ENCODE measurements at regions of chr2 and their contacts with region 1.

Region 1: GRCh38 chr2:231411831-231412617 is 16.5 kb downstream of the B3GNT7 start:
- DNase-seq: peak; percentile 90 to 96 (median 93)
- ATAC-seq: peak; percentile 84
- H3K4me3 ChIP-seq: peak overlapping the region; percentile 26
- H3K4me1 ChIP-seq: peaks cover 22% of the 10 kb centered on the region
- CTCF ChIP-seq: peak; percentile 83

Region 2: GRCh38 chr2:231104115-231104713 is 307.8 kb before region 1 on chr2:
- intact Hi-C with region 1: loop called in 1 of 2 experiments (anchors 10 kb)
- DNase-seq: peak in 1 of 3 donors; percentile 90
- ATAC-seq: peak; percentile 74
- H3K4me3 ChIP-seq: no peak overlapping the region
- H3K4me1 ChIP-seq: peaks cover 6% of the 10 kb centered on the region
- CTCF ChIP-seq: peak; percentile 78

Region 3: DNA sequence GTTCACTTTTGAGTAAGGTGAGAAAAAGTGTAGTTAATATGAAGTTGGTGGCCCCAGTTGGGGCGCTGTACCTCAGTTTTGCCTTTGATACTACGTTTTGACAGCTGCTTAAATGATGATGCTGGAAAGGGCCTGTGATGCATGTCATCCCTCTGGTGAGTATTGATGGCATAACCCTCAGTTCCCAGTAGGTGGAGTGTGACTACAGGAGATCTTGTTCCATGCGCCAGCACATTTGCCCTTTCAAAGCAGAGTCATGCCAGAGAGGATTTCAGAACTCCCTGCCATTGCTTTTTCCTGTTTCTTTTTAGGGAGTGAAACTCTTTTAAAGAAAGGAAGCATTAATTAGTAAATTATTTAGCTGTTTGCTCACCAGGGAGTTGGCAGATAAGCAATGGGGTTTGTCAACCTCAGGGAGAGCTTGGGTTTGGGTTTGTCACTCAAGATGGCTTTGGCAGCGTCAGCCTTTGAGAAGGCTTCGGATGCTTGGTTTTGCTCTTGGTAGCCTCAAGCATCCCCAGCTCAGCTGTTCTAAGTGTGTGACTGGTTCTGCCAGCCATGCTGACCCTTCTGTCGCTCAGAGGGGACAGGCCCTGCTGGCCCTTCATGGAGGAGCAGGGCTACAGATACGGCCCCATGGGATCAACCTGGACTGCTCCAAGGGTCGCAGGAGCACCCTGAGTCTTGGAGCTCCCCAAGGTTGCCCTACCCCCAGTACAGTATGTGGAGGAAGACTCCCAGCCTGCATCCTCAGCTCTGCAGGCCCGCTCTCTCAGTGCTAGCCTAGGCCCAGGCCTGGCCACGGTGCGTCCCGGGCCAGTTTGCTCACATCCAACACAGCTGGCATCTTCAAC is 184.5 kb before region 1 on chr2:
- intact Hi-C with region 1: loop called (anchors 5 to 10 kb)
- DNase-seq: peak in 1 of 3 donors; percentile 81
- ATAC-seq: peak; percentile 96
- H3K4me3 ChIP-seq: no peak overlapping the region
- H3K4me1 ChIP-seq: peaks cover 16% of the 10 kb centered on the region
- CTCF ChIP-seq: peak; percentile 53

Region 4: GRCh38 chr2:231297108-231297908 is 114.7 kb before region 1 on chr2:
- intact Hi-C with region 1: loop called (anchors 5 to 10 kb)
- DNase-seq: peak; percentile 73 to 80 (median 77)
- ATAC-seq: peak; percentile 73
- H3K4me3 ChIP-seq: no peak overlapping the region
- H3K4me1 ChIP-seq: peaks cover 8% of the 10 kb centered on the region
- CTCF ChIP-seq: peak; percentile 62

Measured in mucosa of descending colon (tissue), 3 donors.